Right lobe of liver (tissue), 6 donors: ENCODE measurements at regions of chr17 and their contacts with region 1.

Region 1: DNA sequence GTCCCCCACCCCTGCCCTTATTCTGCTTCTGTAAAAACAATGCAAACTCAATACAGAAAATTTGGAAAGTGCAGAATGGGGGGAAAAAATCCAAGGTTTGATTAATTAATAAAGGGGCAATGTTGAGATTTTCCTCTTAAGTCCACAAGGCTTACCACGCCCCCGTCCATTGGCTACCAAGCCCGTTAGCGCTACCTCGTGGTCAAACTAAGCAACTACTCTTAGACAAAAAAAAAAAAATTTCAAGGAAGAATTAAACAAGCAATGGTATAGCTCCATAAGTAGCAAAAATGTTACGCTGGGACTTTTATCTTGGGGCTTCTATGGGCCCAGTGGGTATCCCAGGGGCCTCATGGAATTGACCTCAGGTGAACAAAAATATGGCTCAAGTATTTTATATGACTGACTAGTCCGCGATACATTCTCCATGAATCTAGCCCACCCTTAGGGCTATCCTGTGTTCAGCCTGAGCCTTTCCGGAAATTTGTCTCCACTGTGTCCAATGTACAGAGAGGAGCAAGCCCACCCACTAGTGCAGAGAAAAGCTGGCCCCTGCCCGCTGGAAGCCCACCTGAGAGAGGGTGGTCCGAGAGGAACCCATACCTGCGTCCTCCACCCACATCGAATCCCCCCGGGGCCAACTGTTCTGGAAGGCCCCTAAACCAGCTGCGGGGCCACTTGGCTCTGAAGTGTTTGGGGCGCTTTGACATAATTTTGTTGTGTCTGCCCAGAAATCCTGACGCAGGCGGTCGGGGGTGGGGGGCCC is 19.1 kb upstream of the TEX2 start:
- DNase-seq: peak; percentile 50 to 61 (median 61)
- ATAC-seq: peak; percentile 75 to 89 (median 80)
- H3K4me3 ChIP-seq: no peak overlapping the region
- H3K27ac ChIP-seq: no peak overlapping the region
- H3K4me1 ChIP-seq: no peaks in the 10 kb centered on the region
- H3K27me3 ChIP-seq: no peaks in the 10 kb centered on the region
- CTCF ChIP-seq: peak; percentile 67 to 81 (median 78)
- POLR2A ChIP-seq: no peak

Region 2: GRCh38 chr17:64041912-64042311 is 240.2 kb before region 1 on chr17:
- intact Hi-C with region 1: loop called in 1 of 2 experiments (anchors 10 kb)
- DNase-seq: peak in 1 of 3 donors; percentile 23
- ATAC-seq: no peak
- H3K4me3 ChIP-seq: no peak overlapping the region
- H3K27ac ChIP-seq: no peak overlapping the region
- H3K4me1 ChIP-seq: peaks cover 0 to 8% (median 0%) of the 10 kb centered on the region in 4 donors
- H3K27me3 ChIP-seq: no peaks in the 10 kb centered on the region
- CTCF ChIP-seq: no peak
- POLR2A ChIP-seq: no peak

Region 3: DNA sequence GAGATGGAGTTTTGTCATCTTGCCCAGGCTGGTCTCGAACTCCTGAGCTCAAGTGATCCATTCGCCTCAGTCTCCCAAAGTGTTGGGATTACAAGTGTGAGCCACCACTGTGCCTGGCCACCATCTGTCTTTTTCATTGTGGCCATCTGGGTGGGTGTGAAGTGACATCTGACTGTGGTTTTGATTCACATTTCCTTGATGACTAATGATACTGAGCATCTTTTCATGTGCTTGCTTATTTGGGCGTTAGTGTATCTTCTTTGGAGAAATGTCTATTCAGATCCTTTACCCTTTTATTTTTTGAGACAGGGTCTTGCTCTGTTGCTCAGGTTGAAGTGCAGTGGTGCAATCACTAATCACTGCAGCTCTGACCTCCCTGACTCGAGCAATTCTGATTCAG is 98.3 kb before region 1 on chr17:
- intact Hi-C with region 1: no loop called
- DNase-seq: no peak
- ATAC-seq: no peak
- H3K4me3 ChIP-seq: no peak overlapping the region
- H3K27ac ChIP-seq: no peak overlapping the region
- H3K4me1 ChIP-seq: peaks cover 0 to 37% (median 13%) of the 10 kb centered on the region in 4 donors
- H3K27me3 ChIP-seq: no peaks in the 10 kb centered on the region
- CTCF ChIP-seq: no peak
- POLR2A ChIP-seq: no peak